ENCODE measurements at regions of chr14 and their contacts with region 1.

Region 1: DNA sequence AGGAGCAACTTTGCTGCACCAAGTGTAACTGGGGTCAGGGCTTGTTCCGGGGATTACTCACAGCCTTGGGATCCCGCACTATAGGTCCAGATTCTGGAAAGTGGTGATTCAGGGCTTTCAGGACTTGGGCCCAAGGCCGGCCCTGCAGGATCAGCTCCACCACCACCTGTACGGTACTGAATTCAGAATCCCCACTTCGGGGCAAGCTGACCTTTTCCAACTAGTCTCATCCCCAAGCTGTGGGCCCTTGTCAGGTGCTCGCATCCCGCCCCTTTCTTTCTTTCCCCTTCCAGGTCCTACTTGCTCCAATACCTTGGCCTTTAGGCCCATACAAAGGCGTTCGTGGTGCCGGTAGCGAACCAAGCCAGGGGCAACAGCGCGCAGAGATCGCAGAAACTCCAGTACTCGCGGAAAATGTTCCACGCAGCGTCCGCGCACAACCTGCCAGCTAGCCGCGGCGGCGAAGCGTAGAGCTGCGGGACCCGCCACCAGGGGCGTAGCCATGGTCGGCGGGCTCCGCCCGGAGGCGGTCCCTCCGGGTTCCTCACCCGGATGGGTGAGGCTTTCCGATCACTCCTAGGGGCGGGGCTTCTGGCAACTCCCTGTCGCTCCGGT is 487 bp downstream of the TINF2 start:
- DNase-seq: peak; percentile 93
- ATAC-seq: peak; percentile 91 to 96 (median 94)
- H3K4me3 ChIP-seq: peak overlapping the region; percentile 59 to 90 (median 74)
- H3K27ac ChIP-seq: peak overlapping the region; percentile 97 to 99 (median 98)
- H3K4me1 ChIP-seq: peaks cover 10 to 60% (median 48%) of the 10 kb centered on the region in 9 donors
- H3K27me3 ChIP-seq: no peaks in the 10 kb centered on the region
- CTCF ChIP-seq: peak; percentile 35 to 75 (median 69)

Region 2: GRCh38 chr14:24271134-24271833 is 29.3 kb after region 1 on chr14 and contains the start of gene RABGGTA:
- intact Hi-C with region 1: loop called in 1 of 10 experiments (anchors 2 kb)
- DNase-seq: peak; percentile 86 to 87
- ATAC-seq: peak; percentile 95 to 98 (median 96)
- H3K4me3 ChIP-seq: peak within 1 kb of the TSS; percentile 82 to 100 (median 94)
- H3K27ac ChIP-seq: peak within 1 kb of the TSS; percentile 95 to 100 (median 98)
- H3K4me1 ChIP-seq: peaks cover 0 to 55% (median 13%) of the 10 kb centered on the region in 9 donors
- H3K27me3 ChIP-seq: no peaks in the 10 kb centered on the region
- CTCF ChIP-seq: peak; percentile 41 to 92 (median 78)
- total RNA-seq, gene RABGGTA: 17.4 to 30.0 (median 19.6) TPM

Region 3: DNA sequence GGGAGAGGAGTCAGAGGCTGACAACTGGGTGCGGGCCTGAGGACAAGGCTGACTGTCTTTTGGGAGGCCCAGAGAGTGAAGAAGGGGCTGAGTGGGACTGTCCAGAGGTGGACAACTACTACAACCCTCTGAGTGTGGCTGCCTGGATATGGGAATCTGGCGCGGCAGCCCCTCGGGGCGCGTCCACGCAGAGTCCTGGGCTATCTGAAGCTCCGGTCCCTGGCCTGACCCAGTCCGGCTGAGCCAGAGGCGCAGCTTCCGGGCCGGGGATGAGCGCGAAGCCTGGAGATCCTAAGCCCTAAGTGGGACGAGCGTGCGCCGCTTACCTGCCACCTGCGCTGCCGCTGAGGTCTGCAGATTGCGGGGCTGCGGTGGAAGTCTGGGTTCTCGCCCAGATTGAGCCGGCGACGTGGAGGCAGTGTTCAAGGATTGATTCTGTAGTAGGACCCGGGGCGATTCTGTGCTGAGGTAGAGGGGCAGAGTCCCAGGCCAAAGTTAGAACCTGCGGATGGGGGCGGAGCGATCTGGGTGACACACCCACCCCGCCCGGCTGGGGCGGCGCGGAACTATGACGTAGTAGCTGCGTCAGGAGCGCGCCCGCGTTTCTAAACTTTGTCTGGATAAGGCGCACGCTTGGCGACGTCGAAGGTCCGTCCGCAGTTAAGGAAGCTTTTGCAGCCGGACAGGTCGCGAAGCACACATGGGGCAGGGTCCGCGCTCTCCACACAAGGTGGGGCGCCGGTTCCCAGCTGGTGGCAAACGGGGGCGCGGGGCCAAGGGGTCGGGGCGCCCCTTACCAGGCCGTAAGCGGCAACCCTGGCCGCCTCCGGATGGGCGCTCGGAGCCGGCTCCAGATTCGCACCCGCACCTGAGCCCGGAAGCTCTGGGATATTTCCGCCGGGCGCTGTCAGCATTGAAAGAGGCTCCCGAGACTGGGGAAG is 57.6 kb after region 1 on chr14 and contains the starts of genes DHRS1 and NOP9:
- intact Hi-C with region 1: loop called (anchors 1 to 5 kb)
- DNase-seq: peak; percentile 91
- ATAC-seq: peak; percentile 88 to 96 (median 94)
- H3K4me3 ChIP-seq: peak within 1 kb of the TSS; percentile 79 to 97 (median 92)
- H3K27ac ChIP-seq: peak within 1 kb of the TSS; percentile 1 to 91 (median 83)
- H3K4me1 ChIP-seq: peaks cover 0 to 46% (median 25%) of the 10 kb centered on the region in 9 donors
- H3K27me3 ChIP-seq: no peaks in the 10 kb centered on the region
- CTCF ChIP-seq: no peak
- total RNA-seq, gene DHRS1: 6.9 to 11.1 (median 9.0) TPM
- total RNA-seq, gene NOP9: 22.0 to 31.9 (median 27.3) TPM

Region 4: GRCh38 chr14:24442273-24443052 is 200.5 kb after region 1 on chr14 and contains the start of gene SDR39U1:
- intact Hi-C with region 1: loop called in 6 of 10 experiments (anchors 2 to 10 kb)
- DNase-seq: peak; percentile 95 to 99
- ATAC-seq: peak; percentile 91 to 97 (median 96)
- H3K4me3 ChIP-seq: peak within 1 kb of the TSS; percentile 55 to 86 (median 72)
- H3K27ac ChIP-seq: peak within 1 kb of the TSS; percentile 94 to 100 (median 99)
- H3K4me1 ChIP-seq: peaks cover 4 to 53% (median 49%) of the 10 kb centered on the region in 9 donors
- H3K27me3 ChIP-seq: no peaks in the 10 kb centered on the region
- CTCF ChIP-seq: peak in 3 of 9 donors; percentile 12 to 22 (median 12)
- total RNA-seq, gene SDR39U1: 55.6 to 93.6 (median 67.4) TPM

Measured in heart right ventricle (tissue), 16 donors.